Mammary epithelial cell (primary cell): ENCODE measurements at regions of chr16 and their contacts with region 1.

Region 1: GRCh38 chr16:54822492-54822891 is 108.2 kb upstream of the IRX5 start:
- DNase-seq: peak; percentile 62
- H3K4me3 ChIP-seq: no peak overlapping the region
- H3K27ac ChIP-seq: no peak overlapping the region
- H3K4me1 ChIP-seq: peaks cover 3% of the 10 kb centered on the region
- H3K27me3 ChIP-seq: no peaks in the 10 kb centered on the region
- CTCF ChIP-seq: no peak

Region 2: GRCh38 chr16:54748611-54749190 is 73.8 kb before region 1 on chr16:
- CTCF ChIA-PET with region 1: no interaction called
- dilution Hi-C with region 1: loop called (anchors 5 kb)
- in situ Hi-C with region 1: no loop called
- intact Hi-C with region 1: no loop called
- DNase-seq: peak; percentile 61
- H3K4me3 ChIP-seq: no peak overlapping the region
- H3K27ac ChIP-seq: no peak overlapping the region
- H3K4me1 ChIP-seq: peaks cover 5% of the 10 kb centered on the region
- H3K27me3 ChIP-seq: peaks cover 1% of the 10 kb centered on the region
- CTCF ChIP-seq: no peak